CD8-positive, alpha-beta memory T cell (primary cell): ENCODE measurements at regions of chr9 and their contacts with region 1.

Region 1: GRCh38 chr9:89466451-89467277 is 31.2 kb downstream of the SEMA4D start:
- DNase-seq: peak in 1 of 5 donors; percentile 71
- H3K4me3 ChIP-seq: peak overlapping the region; percentile 33
- H3K4me3 Mint-ChIP-seq: peak overlapping the region; percentile 40 to 89 (median 79)
- H3K27ac ChIP-seq: peak overlapping the region; percentile 35
- H3K27ac Mint-ChIP-seq: peak overlapping the region; percentile 89 to 97 (median 95)
- H3K4me1 ChIP-seq: peaks cover 99% of the 10 kb centered on the region
- H3K4me1 Mint-ChIP-seq: peaks cover 96 to 99% (median 98%) of the 10 kb centered on the region in 3 donors
- H3K27me3 ChIP-seq: no peaks in the 10 kb centered on the region
- H3K27me3 Mint-ChIP-seq: peaks cover 0 to 2% of the 10 kb centered on the region in 2 donors

Region 2: GRCh38 chr9:89404074-89404473 is 62.6 kb before region 1 on chr9:
- CTCF ChIA-PET with region 1: no interaction called
- POLR2A ChIA-PET with region 1: no interaction called
- DNase-seq: no peak
- H3K4me3 ChIP-seq: no peak overlapping the region
- H3K4me3 Mint-ChIP-seq: no peak overlapping the region
- H3K27ac ChIP-seq: no peak overlapping the region
- H3K27ac Mint-ChIP-seq: peak overlapping the region in 7 of 8 donors; percentile 66 to 95 (median 76)
- H3K4me1 ChIP-seq: peaks cover 36% of the 10 kb centered on the region
- H3K4me1 Mint-ChIP-seq: peaks cover 58 to 71% (median 69%) of the 10 kb centered on the region in 3 donors
- H3K27me3 ChIP-seq: no peaks in the 10 kb centered on the region
- H3K27me3 Mint-ChIP-seq: peaks cover 0 to 5% of the 10 kb centered on the region in 2 donors

Region 3: GRCh38 chr9:89455356-89455824 is 11.3 kb before region 1 on chr9:
- CTCF ChIA-PET with region 1: interaction called, 3 read pairs
- POLR2A ChIA-PET with region 1: interaction called, 15 read pairs
- DNase-seq: peak in 2 of 5 donors; percentile 68 to 69
- H3K4me3 ChIP-seq: peak overlapping the region; percentile 38
- H3K4me3 Mint-ChIP-seq: peak overlapping the region; percentile 34 to 88 (median 78)
- H3K27ac ChIP-seq: peak overlapping the region; percentile 26
- H3K27ac Mint-ChIP-seq: peak overlapping the region; percentile 93 to 99 (median 97)
- H3K4me1 ChIP-seq: peaks cover 89% of the 10 kb centered on the region
- H3K4me1 Mint-ChIP-seq: peaks cover 85 to 95% (median 92%) of the 10 kb centered on the region in 3 donors
- H3K27me3 ChIP-seq: no peaks in the 10 kb centered on the region
- H3K27me3 Mint-ChIP-seq: no peaks in the 10 kb centered on the region